ENCODE measurements at regions of chr2 and their contacts with region 1.

Region 1: GRCh38 chr2:191128172-191128910 is 22.5 kb downstream of the STAT4 start:
- DNase-seq: peak in 3 of 5 donors; percentile 12 to 63 (median 19)
- H3K4me3 ChIP-seq: peak overlapping the region; percentile 17
- H3K4me3 Mint-ChIP-seq: peak overlapping the region; percentile 66 to 83 (median 80)
- H3K27ac ChIP-seq: peak overlapping the region; percentile 65
- H3K27ac Mint-ChIP-seq: peak overlapping the region; percentile 85 to 98 (median 95)
- H3K4me1 ChIP-seq: peaks cover 42% of the 10 kb centered on the region
- H3K4me1 Mint-ChIP-seq: peaks cover 69 to 83% (median 81%) of the 10 kb centered on the region in 3 donors
- H3K27me3 ChIP-seq: no peaks in the 10 kb centered on the region
- H3K27me3 Mint-ChIP-seq: no peaks in the 10 kb centered on the region

Region 2: DNA sequence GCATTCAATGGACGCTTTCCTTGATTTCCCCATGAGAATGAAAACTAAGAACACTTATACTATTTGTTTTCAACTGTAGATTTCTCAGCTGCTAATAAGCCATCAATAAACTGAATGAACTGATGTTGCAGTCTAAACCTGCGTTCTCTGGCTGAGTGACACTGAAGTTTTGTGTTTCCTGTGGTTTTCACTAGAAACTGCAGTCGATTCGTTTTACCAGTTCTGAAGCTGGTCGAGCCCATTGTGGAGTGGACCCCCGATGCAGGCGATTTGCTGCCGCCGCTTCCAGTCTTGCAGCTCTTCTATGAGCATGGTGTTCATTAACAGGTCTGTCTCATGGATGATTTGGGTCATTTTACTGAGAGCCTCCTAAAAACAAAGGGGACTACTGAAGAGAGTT is 63.8 kb before region 1 on chr2:
- CTCF ChIA-PET with region 1: no interaction called
- POLR2A ChIA-PET with region 1: no interaction called
- DNase-seq: peak in 3 of 5 donors; percentile 6 to 51 (median 29)
- H3K4me3 ChIP-seq: peak overlapping the region; percentile 43
- H3K4me3 Mint-ChIP-seq: peak overlapping the region; percentile 82 to 96 (median 90)
- H3K27ac ChIP-seq: no peak overlapping the region
- H3K27ac Mint-ChIP-seq: peak overlapping the region; percentile 86 to 98 (median 96)
- H3K4me1 ChIP-seq: peaks cover 67% of the 10 kb centered on the region
- H3K4me1 Mint-ChIP-seq: peaks cover 73 to 92% (median 88%) of the 10 kb centered on the region in 3 donors
- H3K27me3 ChIP-seq: no peaks in the 10 kb centered on the region
- H3K27me3 Mint-ChIP-seq: no peaks in the 10 kb centered on the region

Region 3: DNA sequence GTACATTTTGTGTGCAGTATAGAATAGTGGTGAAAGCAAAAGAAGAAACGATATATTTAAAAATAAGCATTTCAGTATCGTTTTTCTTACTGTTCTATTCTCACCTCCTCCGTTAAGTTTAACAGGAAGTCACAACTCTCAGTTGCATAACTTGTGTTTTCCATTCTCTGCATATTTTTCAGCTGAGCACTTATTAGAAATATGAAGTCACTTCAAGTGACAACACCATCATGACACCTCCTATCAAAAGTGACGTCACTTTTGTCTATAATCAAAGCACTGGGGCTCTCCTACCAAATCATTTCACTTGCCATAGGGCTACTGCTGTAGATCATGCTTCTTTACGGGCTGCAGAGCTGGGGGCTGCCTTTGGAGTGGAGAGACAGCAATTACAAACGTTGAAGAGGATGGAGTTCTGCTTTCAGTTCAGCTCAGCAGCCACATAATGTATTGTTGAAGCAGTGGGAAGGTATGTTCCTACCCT is 13.9 kb before region 1 on chr2:
- CTCF ChIA-PET with region 1: interaction called, 3 read pairs
- POLR2A ChIA-PET with region 1: interaction called, 10 read pairs
- DNase-seq: peak in 4 of 5 donors; percentile 30 to 68 (median 50)
- H3K4me3 ChIP-seq: no peak overlapping the region
- H3K4me3 Mint-ChIP-seq: peak overlapping the region; percentile 28 to 83 (median 68)
- H3K27ac ChIP-seq: peak overlapping the region; percentile 65
- H3K27ac Mint-ChIP-seq: peak overlapping the region; percentile 91 to 100 (median 98)
- H3K4me1 ChIP-seq: peaks cover 51% of the 10 kb centered on the region
- H3K4me1 Mint-ChIP-seq: peaks cover 76 to 93% (median 89%) of the 10 kb centered on the region in 3 donors
- H3K27me3 ChIP-seq: no peaks in the 10 kb centered on the region
- H3K27me3 Mint-ChIP-seq: no peaks in the 10 kb centered on the region